ENCODE measurements at regions of chr14 and their contacts with region 1.

Region 1: DNA sequence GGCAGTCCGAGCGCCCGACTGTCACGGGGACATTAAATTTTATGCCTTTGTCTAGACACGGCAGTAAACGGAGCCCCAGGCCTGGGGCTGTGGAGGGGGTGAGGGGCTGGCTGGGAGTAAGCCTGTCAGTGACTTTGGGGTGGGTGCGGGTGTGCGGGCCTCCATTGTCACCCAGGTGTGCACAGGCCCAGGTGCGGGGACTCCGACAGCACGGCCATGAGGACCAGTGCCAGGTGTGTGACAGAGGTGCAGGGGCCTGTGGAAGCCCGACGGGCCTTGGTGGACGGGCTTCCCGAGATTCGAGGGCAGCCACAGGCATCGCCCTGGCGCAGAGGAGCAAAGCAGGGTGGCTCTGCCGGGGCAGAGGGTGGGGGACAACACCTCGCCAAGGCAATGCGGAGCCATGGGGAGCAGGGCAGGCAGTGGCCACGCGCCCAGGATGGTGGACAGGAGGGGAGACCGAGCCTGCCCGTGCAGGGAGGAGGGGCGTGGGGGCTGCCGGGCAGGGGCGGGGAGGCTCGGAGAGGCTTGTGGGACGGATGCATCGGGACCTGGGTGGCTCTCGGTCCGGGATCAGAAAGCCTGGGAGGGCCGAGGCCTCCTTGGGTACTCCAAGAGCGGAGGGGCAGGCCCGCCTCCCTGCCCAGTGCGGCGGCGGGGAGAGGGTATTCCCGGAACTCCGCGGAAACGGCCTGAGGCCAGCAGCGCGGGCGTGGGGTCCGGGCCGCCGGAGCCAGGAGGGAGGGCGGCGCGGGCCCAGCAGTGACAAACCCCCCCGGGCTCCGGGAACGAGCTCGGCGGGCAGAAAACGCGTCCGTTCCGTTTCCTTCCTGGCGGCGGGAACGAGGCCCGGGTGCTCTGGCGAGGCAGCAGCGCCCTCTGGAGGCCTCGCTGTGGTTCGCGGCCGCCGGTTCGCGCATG is 1.5 kb downstream of the TMEM121 start:
- DNase-seq: peak; percentile 82 to 88
- ATAC-seq: peak; percentile 80 to 95 (median 89)
- H3K4me3 ChIP-seq: peak overlapping the region; percentile 77
- H3K27ac ChIP-seq: no peak overlapping the region
- H3K4me1 ChIP-seq: peaks cover 17% of the 10 kb centered on the region
- H3K27me3 ChIP-seq: peaks cover 0 to 46% (median 12%) of the 10 kb centered on the region in 3 donors
- CTCF ChIP-seq: peak; percentile 90

Region 2: DNA sequence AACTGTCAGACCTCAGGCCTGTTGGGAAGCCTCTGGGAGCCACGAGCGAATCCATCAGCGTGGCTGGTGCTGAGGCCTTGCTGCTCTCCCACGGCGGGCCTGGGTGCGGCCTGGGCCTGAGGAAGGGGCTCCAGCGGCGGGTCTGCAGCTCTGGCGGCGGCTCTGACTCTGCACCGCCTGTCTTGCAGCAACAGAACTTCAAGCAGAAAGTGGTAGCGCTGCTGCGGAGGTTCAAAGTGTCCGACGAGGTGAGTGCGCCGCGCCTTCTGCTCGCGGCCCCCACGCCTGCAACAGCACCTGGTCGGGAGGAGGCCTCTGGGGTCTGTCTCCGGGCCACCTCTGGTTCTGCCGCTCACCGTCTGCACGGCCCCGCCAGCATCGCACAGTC is 158.3 kb before region 1 on chr14:
- intact Hi-C with region 1: loop called (anchors 1 to 2 kb)
- DNase-seq: no peak
- ATAC-seq: no peak
- H3K4me3 ChIP-seq: no peak overlapping the region
- H3K27ac ChIP-seq: no peak overlapping the region
- H3K4me1 ChIP-seq: no peaks in the 10 kb centered on the region
- H3K27me3 ChIP-seq: no peaks in the 10 kb centered on the region
- CTCF ChIP-seq: no peak

Region 3: DNA sequence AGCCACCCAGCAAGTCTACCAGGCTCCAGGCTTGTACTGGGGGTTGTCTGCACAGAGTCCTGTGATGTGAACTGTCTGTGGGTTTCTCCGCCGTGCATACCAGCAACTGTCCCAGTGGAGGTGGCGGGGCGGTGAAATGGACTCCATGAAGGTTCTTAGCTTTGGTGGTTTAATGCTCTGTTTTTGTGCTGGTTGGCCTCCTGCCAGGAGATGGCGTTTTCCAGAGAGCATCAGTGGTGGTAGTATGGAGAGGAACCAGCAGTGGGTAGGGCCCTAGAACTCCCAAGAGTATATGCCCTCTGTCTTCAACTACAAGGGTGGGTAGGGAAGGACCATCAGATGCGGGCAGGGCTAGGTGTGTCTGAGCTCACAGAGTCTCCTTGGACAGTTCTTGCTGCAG is 302.2 kb after region 1 on chr14:
- intact Hi-C with region 1: no loop called
- DNase-seq: no peak
- ATAC-seq: no peak
- H3K4me3 ChIP-seq: no peak overlapping the region
- H3K27ac ChIP-seq: no peak overlapping the region
- H3K4me1 ChIP-seq: no peaks in the 10 kb centered on the region
- H3K27me3 ChIP-seq: peaks cover 0 to 5% (median 3%) of the 10 kb centered on the region in 3 donors
- CTCF ChIP-seq: no peak

Measured in psoas muscle (tissue), 8 donors.